ENCODE measurements at regions of chrX and their contacts with region 1.

Region 1: GRCh38 chrX:12771445-12772069 is 19.7 kb upstream of the PRPS2 start:
- DNase-seq: peak; percentile 33 to 87 (median 61)
- ATAC-seq: peak; percentile 98 to 100 (median 100)
- H3K4me3 ChIP-seq: no peak overlapping the region
- H3K4me3 Mint-ChIP-seq: peak overlapping the region in 1 of 3 donors; percentile 17
- H3K27ac ChIP-seq: no peak overlapping the region
- H3K27ac Mint-ChIP-seq: no peak overlapping the region
- H3K4me1 ChIP-seq: peaks cover 0 to 7% of the 10 kb centered on the region in 2 experiments
- H3K4me1 Mint-ChIP-seq: peaks cover 6 to 10% (median 9%) of the 10 kb centered on the region in 3 donors
- H3K27me3 ChIP-seq: peaks cover 0 to 6% of the 10 kb centered on the region in 2 experiments
- H3K27me3 Mint-ChIP-seq: peaks cover 5 to 41% of the 10 kb centered on the region in 2 donors

Region 2: GRCh38 chrX:11908371-11908770 is 863.2 kb before region 1 on chrX:
- CTCF ChIA-PET with region 1: interaction called in 1 of 2 experiments, 12 read pairs
- POLR2A ChIA-PET with region 1: no interaction called
- DNase-seq: peak in 12 of 35 experiments; percentile 0 to 46 (median 2)
- ATAC-seq: peak in 1 of 4 experiments; percentile 71
- H3K4me3 ChIP-seq: no peak overlapping the region
- H3K4me3 Mint-ChIP-seq: no peak overlapping the region
- H3K27ac ChIP-seq: no peak overlapping the region
- H3K27ac Mint-ChIP-seq: no peak overlapping the region
- H3K4me1 ChIP-seq: no peaks in the 10 kb centered on the region
- H3K4me1 Mint-ChIP-seq: peaks cover 0 to 6% (median 0%) of the 10 kb centered on the region in 3 donors
- H3K27me3 ChIP-seq: peaks cover 0 to 2% of the 10 kb centered on the region in 2 experiments
- H3K27me3 Mint-ChIP-seq: peaks cover 5 to 13% of the 10 kb centered on the region in 2 donors

Region 3: DNA sequence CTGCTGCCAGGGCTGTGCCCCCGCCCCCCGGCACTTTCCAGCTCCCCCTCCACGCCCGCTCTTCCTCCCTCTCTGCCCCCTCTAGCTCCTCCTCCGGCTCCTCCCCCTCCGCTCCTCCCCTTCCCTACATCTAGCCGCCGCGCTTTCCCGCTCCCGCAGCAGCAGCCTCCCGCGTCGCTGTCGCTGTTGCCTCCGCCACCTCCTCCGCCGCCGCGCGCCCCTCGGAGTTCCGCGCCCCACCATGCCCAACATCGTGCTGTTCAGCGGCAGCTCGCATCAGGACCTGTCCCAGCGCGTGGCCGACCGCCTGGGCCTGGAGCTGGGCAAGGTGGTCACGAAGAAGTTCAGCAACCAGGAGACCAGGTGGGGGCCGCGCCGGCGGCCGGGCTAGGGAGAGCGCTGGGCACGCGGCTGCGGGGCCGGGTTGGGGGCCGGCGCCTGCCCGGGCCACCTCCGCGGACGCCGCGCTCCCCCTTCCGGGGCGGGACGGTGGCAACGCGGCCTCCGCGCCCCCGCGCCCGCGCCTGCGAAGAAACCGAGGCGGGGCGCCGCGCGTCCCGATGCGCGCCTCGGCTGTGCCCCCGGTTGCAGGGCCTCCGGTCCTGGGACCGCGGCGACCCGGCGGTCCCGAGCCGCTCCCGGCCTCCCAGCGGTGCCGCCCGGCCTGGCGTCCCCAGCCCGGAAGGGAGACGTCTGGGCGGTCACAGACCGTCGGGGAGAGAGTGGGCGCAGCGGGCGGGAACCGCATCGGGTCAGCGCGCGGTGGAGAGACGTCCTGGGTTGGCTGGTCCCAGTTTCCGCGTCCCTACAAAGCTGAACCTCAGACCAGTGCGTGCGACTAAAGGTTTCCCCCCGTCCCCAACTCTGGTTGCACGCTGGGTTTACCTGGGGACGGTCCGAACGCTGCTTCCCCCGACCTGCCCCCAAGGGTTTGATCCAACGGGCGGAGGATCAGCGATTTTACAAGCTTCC is 20.0 kb after region 1 on chrX and contains the start of gene PRPS2:
- CTCF ChIA-PET with region 1: interaction called, 3 to 20 read pairs
- POLR2A ChIA-PET with region 1: no interaction called
- DNase-seq: peak; percentile 39 to 75 (median 61)
- ATAC-seq: peak; percentile 89 to 94 (median 92)
- H3K4me3 ChIP-seq: peak within 1 kb of the TSS; percentile 72 to 83
- H3K4me3 Mint-ChIP-seq: peak within 1 kb of the TSS; percentile 77 to 86 (median 83)
- H3K27ac ChIP-seq: peak within 1 kb of the TSS; percentile 34
- H3K27ac Mint-ChIP-seq: peak within 1 kb of the TSS; percentile 55 to 76
- H3K4me1 ChIP-seq: peaks cover 0 to 10% of the 10 kb centered on the region in 2 experiments
- H3K4me1 Mint-ChIP-seq: peaks cover 22 to 33% (median 25%) of the 10 kb centered on the region in 3 donors
- H3K27me3 ChIP-seq: no peaks in the 10 kb centered on the region
- H3K27me3 Mint-ChIP-seq: peaks cover 2 to 7% of the 10 kb centered on the region in 2 donors
- total RNA-seq, gene PRPS2: 20.9 to 31.6 (median 30.6) TPM